ENCODE measurements at regions of chr18 and their contacts with region 1.

Region 1: GRCh38 chr18:31722369-31722957 is 38.1 kb upstream of the B4GALT6 start:
- H3K4me3 ChIP-seq: no peak overlapping the region
- H3K27ac ChIP-seq: no peak overlapping the region
- H3K4me1 ChIP-seq: no peaks in the 10 kb centered on the region
- CTCF ChIP-seq: peak; percentile 52; the same call in 1 of the 2 replicates

Region 2: GRCh38 chr18:31555971-31556747 is 166.3 kb before region 1 on chr18:
- CTCF ChIA-PET with region 1: interaction called, 37 read pairs
- POLR2A ChIA-PET with region 1: no interaction called
- H3K4me3 ChIP-seq: no peak overlapping the region
- H3K27ac ChIP-seq: no peak overlapping the region
- H3K4me1 ChIP-seq: no peaks in the 10 kb centered on the region
- CTCF ChIP-seq: peak; percentile 70

Region 3: GRCh38 chr18:31563778-31564177 is 158.7 kb before region 1 on chr18:
- CTCF ChIA-PET with region 1: interaction called, 20 read pairs
- POLR2A ChIA-PET with region 1: no interaction called
- H3K4me3 ChIP-seq: no peak overlapping the region
- H3K27ac ChIP-seq: no peak overlapping the region
- H3K4me1 ChIP-seq: no peaks in the 10 kb centered on the region
- CTCF ChIP-seq: no peak

Region 4: DNA sequence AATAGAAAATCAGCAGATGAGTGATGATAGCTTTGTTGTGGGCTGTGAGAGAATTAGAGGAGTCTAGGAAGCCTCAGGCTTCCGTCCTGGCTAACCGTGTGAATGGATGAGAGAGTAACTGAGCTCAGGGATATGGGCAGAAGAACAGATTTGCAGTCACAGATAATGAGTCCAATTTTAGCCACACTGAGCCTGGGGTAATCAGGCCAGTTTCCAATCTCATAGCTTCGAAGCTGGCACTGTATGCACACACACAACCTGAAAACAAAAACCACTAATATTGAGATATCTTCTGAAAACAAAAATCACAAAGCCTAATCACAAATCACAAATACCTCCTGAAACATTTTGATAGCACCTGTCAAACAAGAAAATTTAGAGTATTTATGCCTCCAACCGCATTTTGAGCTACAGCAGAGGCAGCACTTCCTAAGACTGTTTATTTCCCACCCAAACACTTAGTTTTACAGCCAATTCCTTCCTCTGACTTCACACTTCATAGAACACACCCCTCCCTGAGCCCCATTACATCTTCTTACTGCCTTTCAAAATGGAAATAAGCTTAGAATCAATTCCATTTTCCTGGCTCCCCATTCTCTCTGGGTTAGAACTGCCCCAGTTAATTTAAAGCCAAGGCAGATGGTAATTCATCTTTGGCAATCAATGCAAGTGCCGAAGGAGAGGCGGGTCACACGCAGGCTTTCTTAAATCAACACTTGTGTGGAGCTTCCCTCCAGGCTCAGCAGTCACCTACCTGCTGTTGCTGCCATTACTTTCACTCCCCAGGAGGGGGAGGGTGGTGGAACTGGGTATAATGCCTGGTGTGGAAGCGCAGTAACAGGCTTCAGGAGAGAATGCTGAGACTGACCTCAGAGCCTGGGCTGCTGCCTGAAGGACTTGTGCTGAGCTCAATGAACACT is 111.9 kb before region 1 on chr18:
- CTCF ChIA-PET with region 1: interaction called, 13 read pairs
- POLR2A ChIA-PET with region 1: no interaction called
- H3K4me3 ChIP-seq: no peak overlapping the region
- H3K27ac ChIP-seq: no peak overlapping the region
- H3K4me1 ChIP-seq: no peaks in the 10 kb centered on the region
- CTCF ChIP-seq: no peak; the same call in 1 of the 2 replicates

Region 5: DNA sequence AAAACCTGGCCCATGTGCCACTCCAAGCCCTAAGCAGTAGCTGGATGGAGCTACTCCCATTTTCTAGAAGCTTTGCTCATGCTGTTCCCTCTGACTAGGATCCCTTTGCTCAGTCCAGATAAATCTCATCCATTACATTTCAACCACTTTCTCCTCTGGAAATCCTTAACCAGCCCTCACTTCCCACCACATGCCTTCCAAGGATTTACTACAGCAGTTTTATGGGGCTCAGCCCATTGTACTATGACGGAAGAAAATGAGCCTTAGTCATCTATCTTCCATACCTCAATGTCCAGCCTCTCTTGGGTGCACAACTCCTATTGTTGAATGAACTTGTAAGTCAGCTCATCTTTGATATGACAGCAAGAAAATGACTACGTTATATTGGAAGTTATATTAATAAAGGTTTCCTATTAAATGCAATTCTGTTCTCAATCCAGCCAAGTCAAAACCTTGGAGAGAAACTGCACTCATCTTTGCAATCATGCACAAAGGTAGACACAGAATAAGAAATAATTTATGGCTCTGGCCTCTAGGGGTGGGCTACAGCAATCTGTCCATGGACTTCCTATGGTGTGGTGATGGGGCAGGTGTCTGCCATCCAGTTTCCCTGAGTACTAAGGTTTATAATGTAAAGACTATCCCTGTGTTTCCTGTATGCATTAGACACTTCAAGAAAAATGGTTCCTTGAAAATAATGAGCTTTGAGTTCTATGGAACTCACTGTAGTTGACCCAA is 41.5 kb before region 1 on chr18:
- CTCF ChIA-PET with region 1: interaction called, 12 read pairs
- POLR2A ChIA-PET with region 1: no interaction called
- H3K4me3 ChIP-seq: no peak overlapping the region
- H3K27ac ChIP-seq: no peak overlapping the region
- H3K4me1 ChIP-seq: peaks cover 2% of the 10 kb centered on the region
- CTCF ChIP-seq: 0 out of 2 replicates have a peak, but pooled peaks have one; percentile 11

Region 6: GRCh38 chr18:31741097-31741735 is 18.8 kb after region 1 on chr18:
- CTCF ChIA-PET with region 1: interaction called, 80 read pairs
- POLR2A ChIA-PET with region 1: no interaction called
- H3K4me3 ChIP-seq: no peak overlapping the region
- H3K27ac ChIP-seq: no peak overlapping the region
- H3K4me1 ChIP-seq: no peaks in the 10 kb centered on the region
- CTCF ChIP-seq: peak; percentile 64

Region 7: GRCh38 chr18:31996007-31996406 is 273.5 kb after region 1 on chr18:
- CTCF ChIA-PET with region 1: no interaction called
- POLR2A ChIA-PET with region 1: no interaction called
- H3K4me3 ChIP-seq: no peak overlapping the region
- H3K27ac ChIP-seq: no peak overlapping the region
- H3K4me1 ChIP-seq: no peaks in the 10 kb centered on the region
- CTCF ChIP-seq: no peak

Measured in HEK293 (cell line).